ENCODE measurements at regions of chr13 and their contacts with region 1.

Region 1: DNA sequence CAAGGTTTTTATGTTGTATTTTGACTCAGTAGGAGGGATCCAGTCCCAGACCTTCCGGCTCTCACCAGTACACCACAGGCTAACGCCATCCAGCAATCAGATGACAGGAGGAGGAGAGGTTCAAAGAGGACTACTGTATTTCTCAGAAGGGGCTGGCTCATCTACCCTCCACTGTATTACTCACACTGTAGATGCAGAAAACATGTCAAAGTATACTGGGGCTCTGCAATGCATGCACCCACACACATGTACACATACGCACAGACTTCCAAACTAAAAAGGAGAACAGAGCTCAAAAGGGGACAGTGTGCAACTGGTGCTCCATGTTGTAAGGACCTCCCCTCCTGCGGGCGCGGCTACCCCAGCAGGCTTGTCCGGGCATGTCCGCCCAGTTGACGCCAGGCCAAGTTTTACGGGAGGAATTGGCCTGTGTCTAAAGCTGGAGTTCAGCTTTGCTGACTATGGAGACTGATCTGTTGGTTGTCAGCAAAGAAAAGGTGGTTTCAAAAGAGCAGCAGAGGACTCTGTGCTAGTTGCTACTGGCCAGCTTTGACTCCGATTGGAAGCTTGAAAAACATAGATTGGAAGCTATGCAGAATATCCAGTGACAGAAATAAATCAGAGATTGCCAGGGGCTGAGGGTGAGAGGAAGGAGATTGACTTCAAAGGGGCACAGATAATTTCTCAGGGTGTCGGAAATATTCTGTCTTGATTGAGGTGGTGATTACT is 314.2 kb downstream of the DLEU7 start:
- DNase-seq: peak; percentile 72 to 89
- ATAC-seq: peak; percentile 68 to 79
- H3K4me3 ChIP-seq: peak overlapping the region; percentile 31 to 43 (median 40)
- H3K27ac ChIP-seq: peak overlapping the region; percentile 81 to 91 (median 84)
- H3K4me1 ChIP-seq: peaks cover 48 to 54% of the 10 kb centered on the region in 2 donors
- H3K27me3 ChIP-seq: no peaks in the 10 kb centered on the region
- CTCF ChIP-seq: no peak
- POLR2A ChIP-seq: no peak

Region 2: GRCh38 chr13:49652355-49653305 is 876.7 kb before region 1 on chr13:
- in situ Hi-C with region 1: no loop called
- intact Hi-C with region 1: loop called (anchors 5 kb)
- DNase-seq: peak; percentile 87 to 95
- ATAC-seq: peak; percentile 59 to 71
- H3K4me3 ChIP-seq: peak overlapping the region in 3 of 4 donors; percentile 25 to 38 (median 30)
- H3K27ac ChIP-seq: peak overlapping the region; percentile 95 to 98 (median 96)
- H3K4me1 ChIP-seq: peaks cover 80 to 81% of the 10 kb centered on the region in 2 donors
- H3K27me3 ChIP-seq: no peaks in the 10 kb centered on the region
- CTCF ChIP-seq: peak; percentile 61 to 78 (median 71)
- POLR2A ChIP-seq: no peak

Region 3: DNA sequence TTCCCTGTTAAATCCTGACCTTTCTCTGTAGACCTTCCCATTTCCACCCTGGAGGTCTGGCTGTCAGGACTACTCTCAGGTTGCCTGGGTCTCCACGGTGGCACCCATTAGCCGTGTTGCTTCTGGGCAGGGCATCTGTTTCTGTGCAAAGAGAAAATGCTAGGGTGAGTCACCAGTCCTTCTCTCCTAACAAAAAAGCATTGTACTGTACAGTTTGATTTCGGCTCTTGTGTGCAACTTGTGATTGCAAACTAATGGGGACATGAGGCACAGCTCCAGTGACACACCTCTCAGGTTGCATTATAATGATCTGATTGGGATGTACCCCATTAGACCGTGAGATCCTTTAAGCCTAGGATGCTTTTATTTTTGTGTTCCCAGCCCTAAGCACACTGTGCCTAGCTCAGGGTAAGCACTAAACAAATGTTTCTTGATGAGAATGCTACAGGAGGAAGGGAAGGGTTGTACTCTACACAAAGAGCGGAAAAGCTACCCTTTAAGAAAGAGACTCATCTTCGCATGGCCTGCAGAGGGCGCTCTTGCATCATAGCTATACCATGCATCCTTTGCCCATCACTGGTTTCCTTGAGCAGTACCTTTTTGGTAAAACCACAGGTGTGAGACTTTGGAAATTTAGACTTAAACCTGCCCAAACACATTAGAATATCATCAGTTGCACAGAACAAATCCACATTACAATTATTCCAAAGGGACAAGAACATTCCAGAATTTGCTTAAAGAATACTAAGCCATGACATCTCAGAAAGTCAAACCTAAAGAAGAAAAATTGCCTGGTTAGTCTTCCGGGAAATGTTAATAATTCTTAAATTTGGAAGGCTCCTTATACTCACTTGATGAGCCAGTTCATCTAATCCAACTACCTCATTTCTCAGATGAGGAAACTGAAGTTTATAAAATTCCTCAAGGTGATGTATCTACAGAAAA is 552.7 kb before region 1 on chr13:
- in situ Hi-C with region 1: loop called in 1 of 4 experiments (anchors 10 kb)
- intact Hi-C with region 1: loop called (anchors 2 kb)
- DNase-seq: peak; percentile 30 to 48
- ATAC-seq: peak; percentile 82 to 88
- H3K4me3 ChIP-seq: no peak overlapping the region
- H3K27ac ChIP-seq: no peak overlapping the region
- H3K4me1 ChIP-seq: peaks cover 0 to 4% of the 10 kb centered on the region in 2 donors
- H3K27me3 ChIP-seq: no peaks in the 10 kb centered on the region
- CTCF ChIP-seq: peak; percentile 75 to 91 (median 88)
- POLR2A ChIP-seq: no peak

Region 4: DNA sequence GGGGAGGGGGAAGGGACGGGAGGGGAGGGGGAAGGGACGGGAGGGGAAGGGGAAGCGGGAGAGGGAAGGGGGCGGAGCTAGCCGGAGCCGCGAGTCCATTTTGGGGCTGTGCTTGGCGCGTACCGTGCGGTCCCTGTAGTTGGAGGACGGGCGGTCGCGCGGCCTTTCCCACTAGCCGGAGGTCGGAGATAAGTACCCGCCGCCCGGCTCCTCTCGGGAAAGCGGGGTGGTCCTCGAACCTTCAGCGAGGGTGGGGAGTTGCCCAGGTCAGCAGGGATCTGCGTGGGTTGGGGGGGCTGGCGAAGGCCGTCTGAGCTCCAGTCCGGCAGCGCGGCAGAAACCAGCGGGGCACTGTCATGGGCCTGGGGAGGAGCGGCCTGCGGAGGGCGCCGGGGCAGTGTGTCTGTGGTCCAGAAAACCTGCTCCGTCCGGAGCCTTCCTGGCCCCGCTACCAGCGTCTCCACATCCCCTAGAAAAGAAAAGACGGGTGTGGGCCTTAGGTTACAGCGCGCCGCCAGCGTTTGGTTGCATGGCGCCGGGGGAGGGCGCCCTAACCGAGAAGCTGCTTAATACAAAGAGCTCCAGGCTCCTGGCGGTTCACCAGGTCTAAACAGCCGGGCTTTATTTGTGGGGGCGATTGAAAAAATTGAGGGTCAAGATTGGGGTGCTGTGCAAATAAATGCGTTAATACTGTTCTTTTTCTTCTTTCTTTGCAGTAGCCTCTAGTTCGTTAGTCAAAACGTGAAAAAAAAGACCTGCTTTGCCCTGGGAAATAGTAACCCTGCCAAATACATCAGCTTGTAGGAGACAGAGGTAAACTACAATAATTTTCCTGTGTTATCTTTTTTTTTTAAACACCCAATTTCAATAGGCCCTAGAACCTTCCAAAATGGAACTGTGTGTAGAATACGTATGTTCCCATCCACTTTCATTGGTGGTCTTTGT is 532.1 kb before region 1 on chr13 and contains the start of gene TRIM13:
- in situ Hi-C with region 1: loop called in 2 of 4 experiments (anchors 10 kb)
- intact Hi-C with region 1: no loop called
- DNase-seq: peak; percentile 81 to 91
- ATAC-seq: peak; percentile 87 to 88
- H3K4me3 ChIP-seq: peak within 1 kb of the TSS; percentile 94 to 97 (median 96)
- H3K27ac ChIP-seq: peak within 1 kb of the TSS; percentile 99 to 100 (median 99)
- H3K4me1 ChIP-seq: peaks cover 46 to 47% of the 10 kb centered on the region in 2 donors
- H3K27me3 ChIP-seq: no peaks in the 10 kb centered on the region
- CTCF ChIP-seq: peak; percentile 59 to 81 (median 70)
- POLR2A ChIP-seq: peak; percentile 75 to 89
- total RNA-seq, gene TRIM13: 11.4 to 21.5 (median 19.1) TPM

Region 5: DNA sequence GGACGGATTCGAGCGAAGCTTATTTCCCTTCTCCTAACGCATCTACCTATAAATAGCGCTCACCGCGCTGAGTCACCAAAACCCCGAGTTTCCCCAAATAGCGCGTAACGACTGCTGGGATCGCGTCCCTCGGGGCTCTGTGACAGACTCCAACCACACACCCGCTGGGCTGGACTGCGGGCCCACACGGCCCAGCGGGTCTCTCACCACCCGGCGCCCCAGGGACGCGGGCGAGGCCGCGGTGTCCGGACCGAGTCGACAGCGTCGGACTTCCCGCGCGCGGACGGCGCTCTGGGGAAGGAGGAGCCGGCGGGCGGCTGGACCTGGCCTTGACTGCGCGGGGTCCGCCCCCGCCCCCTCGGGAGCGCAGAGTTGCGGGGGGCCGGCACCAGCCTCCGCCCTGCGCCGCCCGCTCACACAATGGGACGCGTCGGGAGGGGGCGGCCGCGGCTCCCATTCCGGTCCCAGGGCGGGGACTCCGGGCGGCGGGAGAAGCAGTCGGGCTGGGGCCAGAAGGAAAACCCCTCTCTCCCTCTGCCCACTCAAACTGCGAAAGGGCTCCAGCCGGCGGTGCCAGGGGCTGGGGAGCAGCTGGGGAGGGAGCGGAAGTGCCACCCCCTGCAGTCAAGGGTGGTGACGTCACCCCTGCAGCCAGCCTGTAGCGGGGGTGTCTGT is 405.3 kb before region 1 on chr13:
- in situ Hi-C with region 1: no loop called
- intact Hi-C with region 1: loop called (anchors 2 kb)
- DNase-seq: peak; percentile 90 to 99
- ATAC-seq: peak; percentile 68 to 70
- H3K4me3 ChIP-seq: peak overlapping the region; percentile 84 to 99 (median 90)
- H3K27ac ChIP-seq: peak overlapping the region; percentile 98 to 100 (median 99)
- H3K4me1 ChIP-seq: peaks cover 48 to 49% of the 10 kb centered on the region in 2 donors
- H3K27me3 ChIP-seq: no peaks in the 10 kb centered on the region
- CTCF ChIP-seq: peak in 1 of 5 experiments; percentile 36
- POLR2A ChIP-seq: peak; percentile 97

Region 6: DNA sequence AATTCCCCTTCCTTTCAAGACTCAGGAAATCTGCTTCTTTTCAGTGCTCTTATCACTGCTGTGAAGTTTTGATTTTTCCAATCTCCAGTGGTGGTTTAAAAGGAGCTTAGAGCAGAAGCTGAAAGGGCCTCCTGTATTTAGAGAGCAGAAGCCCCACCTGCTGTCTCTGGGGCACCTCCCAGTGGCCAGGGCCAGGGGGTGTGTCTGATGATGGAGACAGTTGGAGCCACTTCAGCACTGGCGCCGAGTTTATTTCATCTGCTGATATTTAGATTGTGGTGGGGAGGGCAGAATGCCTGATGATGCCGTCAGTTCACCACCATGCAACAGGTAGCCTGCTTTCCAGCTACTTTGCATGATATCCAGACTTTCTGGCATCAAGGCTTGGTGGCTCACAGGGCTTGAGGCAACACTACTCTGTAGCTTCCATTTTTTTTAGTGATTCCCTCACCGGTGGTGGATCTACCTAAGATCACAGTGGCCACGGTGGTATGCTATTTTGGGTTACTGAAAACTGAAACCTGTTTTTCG is 142.2 kb before region 1 on chr13:
- in situ Hi-C with region 1: loop called in 3 of 4 experiments (anchors 10 to 25 kb)
- intact Hi-C with region 1: loop called (anchors 2 kb)
- DNase-seq: peak; percentile 76 to 89
- ATAC-seq: peak; percentile 86 to 90
- H3K4me3 ChIP-seq: peak overlapping the region; percentile 46 to 55 (median 46)
- H3K27ac ChIP-seq: peak overlapping the region; percentile 91 to 96 (median 91)
- H3K4me1 ChIP-seq: peaks cover 18 to 33% of the 10 kb centered on the region in 2 donors
- H3K27me3 ChIP-seq: no peaks in the 10 kb centered on the region
- CTCF ChIP-seq: peak in 3 of 5 experiments; percentile 4 to 38 (median 24)
- POLR2A ChIP-seq: peak; percentile 49 to 78

Region 7: GRCh38 chr13:50801087-50801931 is 272.0 kb after region 1 on chr13:
- in situ Hi-C with region 1: no loop called
- intact Hi-C with region 1: loop called (anchors 10 kb)
- DNase-seq: peak; percentile 6 to 20
- ATAC-seq: peak; percentile 75 to 95
- H3K4me3 ChIP-seq: no peak overlapping the region
- H3K27ac ChIP-seq: no peak overlapping the region
- H3K4me1 ChIP-seq: peaks cover 5 to 15% of the 10 kb centered on the region in 2 donors
- H3K27me3 ChIP-seq: no peaks in the 10 kb centered on the region
- CTCF ChIP-seq: peak; percentile 39 to 69 (median 64)
- POLR2A ChIP-seq: no peak